Activated T-helper 1 cell treated with anti-CD3 and anti-CD28 coated beads, Interleukin-12 subunit alpha, Interleukin-12 subunit beta, Interleukin-2, Interleukin-4 antibody, amounts not matched to agents 30 ng/mL and 10 ng/mL and 1 ng/mL, durations not matched to agents 14 hours and 24 hours and 36 hours (primary cell): ENCODE measurements at regions of chr22 and their contacts with region 1.

Region 1: DNA sequence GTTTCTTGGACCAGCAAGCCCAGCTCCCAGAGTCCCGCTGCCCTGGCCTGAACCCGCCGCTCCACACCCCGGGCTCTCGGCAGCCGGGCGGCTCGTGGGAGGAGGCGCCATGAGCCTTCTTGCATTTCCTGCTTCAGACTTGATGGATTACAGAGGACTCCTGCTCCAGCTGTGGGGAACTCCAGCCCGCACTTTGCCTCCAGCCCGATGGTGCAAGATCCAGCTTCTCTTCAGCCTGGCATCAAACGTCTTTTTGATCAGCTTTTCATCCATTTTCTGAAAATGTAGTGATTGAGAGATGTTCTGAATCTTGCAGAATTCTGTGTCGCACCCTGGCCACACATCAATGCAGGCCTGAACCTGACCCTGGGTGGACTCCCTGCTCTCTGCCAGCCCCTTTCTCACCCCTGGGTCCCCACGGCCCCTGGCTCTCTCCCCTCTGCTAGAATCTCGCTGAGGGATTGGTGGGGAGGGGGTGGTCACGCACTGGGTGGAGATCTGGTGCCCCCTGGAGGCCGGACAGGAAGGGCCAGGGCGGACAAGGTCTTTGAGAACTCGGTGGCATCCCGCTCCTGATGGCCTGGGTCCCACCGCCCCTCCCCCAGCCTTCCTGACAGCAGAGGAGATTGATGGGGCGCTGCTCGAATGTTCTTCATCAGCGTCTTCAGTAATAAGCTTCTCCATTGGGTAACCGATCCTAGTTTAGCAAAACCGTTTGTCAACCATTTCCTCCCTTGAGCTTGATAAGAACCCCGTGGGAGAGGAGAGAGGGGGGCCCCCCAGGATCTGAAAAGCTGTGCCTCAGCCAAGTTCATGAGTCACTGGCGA is 12.1 kb upstream of the NFAM1 start:
- DNase-seq: peak; percentile 76
- H3K4me3 Mint-ChIP-seq: peak overlapping the region; percentile 68
- H3K27ac Mint-ChIP-seq: peak overlapping the region; percentile 78
- H3K4me1 Mint-ChIP-seq: peaks cover 35% of the 10 kb centered on the region
- H3K27me3 Mint-ChIP-seq: peaks cover 5% of the 10 kb centered on the region

Region 2: GRCh38 chr22:41888627-41889200 is 555.6 kb before region 1 on chr22:
- intact Hi-C with region 1: no loop called
- DNase-seq: no peak
- H3K4me3 Mint-ChIP-seq: no peak overlapping the region
- H3K27ac Mint-ChIP-seq: no peak overlapping the region
- H3K4me1 Mint-ChIP-seq: no peaks in the 10 kb centered on the region
- H3K27me3 Mint-ChIP-seq: no peaks in the 10 kb centered on the region

Region 3: GRCh38 chr22:41946629-41947423 is 497.5 kb before region 1 on chr22 and contains the start of gene CENPM:
- intact Hi-C with region 1: loop called (anchors 2 kb)
- DNase-seq: peak; percentile 93
- H3K4me3 Mint-ChIP-seq: peak within 1 kb of the TSS; percentile 92
- H3K27ac Mint-ChIP-seq: peak within 1 kb of the TSS; percentile 93
- H3K4me1 Mint-ChIP-seq: peaks cover 47% of the 10 kb centered on the region
- H3K27me3 Mint-ChIP-seq: no peaks in the 10 kb centered on the region
- total RNA-seq, gene CENPM: 82.0 and 84.6 TPM in 2 replicates